Psoas muscle (tissue), 8 donors: ENCODE measurements at regions of chr4 and their contacts with region 1.

Region 1: DNA sequence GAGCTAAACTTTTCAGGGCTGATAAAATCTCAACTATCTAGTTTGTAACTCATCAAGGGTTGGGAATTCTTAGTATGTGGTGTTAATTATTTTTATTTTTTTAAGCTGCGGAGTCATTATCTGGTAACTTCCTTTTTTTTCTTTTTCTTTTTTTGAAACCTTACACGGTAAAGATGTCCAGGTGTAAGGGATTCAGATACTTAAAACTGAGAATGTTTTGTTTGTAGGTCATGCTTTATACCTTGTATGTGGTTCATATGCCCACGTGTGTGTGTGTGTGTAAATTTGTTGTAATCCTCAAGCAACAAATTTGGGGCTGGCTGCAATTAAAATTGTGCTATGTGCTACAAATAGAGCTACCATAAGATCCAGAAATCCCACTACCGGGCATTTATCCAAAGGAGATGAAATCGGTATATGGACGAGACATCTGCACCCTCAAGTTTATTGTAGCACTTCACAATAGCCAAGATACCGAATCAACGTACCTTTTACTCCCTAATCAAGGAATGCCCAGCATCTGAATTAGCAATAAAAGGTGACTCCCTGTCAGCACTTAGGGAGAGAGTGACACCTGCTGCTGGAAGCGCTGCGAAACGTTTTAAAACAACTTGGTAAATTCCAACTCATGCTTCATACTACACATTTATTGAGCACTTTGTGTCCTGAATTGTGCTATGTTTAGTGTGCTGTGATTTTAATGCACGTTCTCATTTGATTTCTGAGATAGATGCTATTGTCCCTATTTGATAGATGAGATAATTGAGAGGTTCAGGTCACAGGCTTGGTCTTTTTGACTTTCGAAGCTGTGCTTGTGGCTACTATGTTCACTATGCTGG is 16.1 kb downstream of the MSMO1 start:
- DNase-seq: no peak
- ATAC-seq: no peak
- H3K4me3 ChIP-seq: no peak overlapping the region
- H3K27ac ChIP-seq: no peak overlapping the region
- H3K4me1 ChIP-seq: no peaks in the 10 kb centered on the region
- H3K27me3 ChIP-seq: no peaks in the 10 kb centered on the region
- CTCF ChIP-seq: no peak

Region 2: DNA sequence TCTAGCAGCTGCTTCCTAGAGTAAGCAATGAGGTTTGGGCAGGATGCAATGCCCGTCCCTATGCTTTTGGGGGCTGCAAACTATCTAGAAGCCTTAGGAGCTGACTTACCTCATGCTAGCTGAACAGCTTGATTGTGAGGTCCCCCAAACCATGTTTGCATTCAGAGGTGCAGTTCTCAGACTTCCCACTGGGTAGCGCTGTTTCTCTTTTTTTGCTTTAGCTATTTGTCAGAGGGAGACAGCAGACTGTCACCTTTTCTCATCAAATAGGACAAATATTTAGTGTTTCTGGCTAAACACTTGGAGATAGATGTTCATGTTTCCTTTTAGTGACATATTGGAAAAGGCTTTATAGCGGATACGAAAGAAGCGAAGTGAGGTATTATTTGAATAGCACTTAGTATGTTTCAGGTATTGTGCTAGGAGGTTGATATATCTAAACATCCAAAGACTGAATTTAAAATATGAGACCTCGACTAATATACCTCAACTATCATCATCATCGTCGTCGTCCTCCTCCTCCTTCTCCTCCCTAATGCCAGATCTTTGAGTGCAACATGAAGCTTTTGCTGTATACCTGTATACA is 212.2 kb before region 1 on chr4:
- intact Hi-C with region 1: loop called in 1 of 2 experiments (anchors 10 kb)
- DNase-seq: no peak
- ATAC-seq: peak in 1 of 4 donors; percentile 73
- H3K4me3 ChIP-seq: no peak overlapping the region
- H3K27ac ChIP-seq: no peak overlapping the region
- H3K4me1 ChIP-seq: no peaks in the 10 kb centered on the region
- H3K27me3 ChIP-seq: no peaks in the 10 kb centered on the region
- CTCF ChIP-seq: peak; percentile 87

Region 3: DNA sequence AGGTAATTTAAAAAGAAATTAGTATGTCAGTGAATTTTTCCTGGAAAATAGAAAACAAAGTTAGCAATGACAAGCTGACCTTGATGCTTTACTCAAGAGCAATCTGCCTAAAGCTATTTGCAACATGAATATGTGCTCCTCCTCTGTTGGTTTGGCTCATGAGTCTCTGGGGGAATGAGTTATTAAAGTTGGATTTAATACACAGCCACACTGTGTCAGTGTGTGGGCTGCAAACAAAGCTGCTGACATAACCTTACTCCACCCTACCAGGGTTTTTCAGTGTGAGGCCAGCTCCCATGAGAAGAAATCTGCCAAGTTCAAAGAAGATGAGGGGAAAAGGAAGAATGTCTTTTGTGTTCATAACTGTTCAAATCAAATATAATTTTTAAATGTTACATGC is 810.0 kb after region 1 on chr4:
- intact Hi-C with region 1: no loop called
- DNase-seq: no peak
- ATAC-seq: no peak
- H3K4me3 ChIP-seq: no peak overlapping the region
- H3K27ac ChIP-seq: no peak overlapping the region
- H3K4me1 ChIP-seq: no peaks in the 10 kb centered on the region
- H3K27me3 ChIP-seq: no peaks in the 10 kb centered on the region
- CTCF ChIP-seq: no peak